ENCODE measurements at regions of chr22 and their contacts with region 1.

Region 1: DNA sequence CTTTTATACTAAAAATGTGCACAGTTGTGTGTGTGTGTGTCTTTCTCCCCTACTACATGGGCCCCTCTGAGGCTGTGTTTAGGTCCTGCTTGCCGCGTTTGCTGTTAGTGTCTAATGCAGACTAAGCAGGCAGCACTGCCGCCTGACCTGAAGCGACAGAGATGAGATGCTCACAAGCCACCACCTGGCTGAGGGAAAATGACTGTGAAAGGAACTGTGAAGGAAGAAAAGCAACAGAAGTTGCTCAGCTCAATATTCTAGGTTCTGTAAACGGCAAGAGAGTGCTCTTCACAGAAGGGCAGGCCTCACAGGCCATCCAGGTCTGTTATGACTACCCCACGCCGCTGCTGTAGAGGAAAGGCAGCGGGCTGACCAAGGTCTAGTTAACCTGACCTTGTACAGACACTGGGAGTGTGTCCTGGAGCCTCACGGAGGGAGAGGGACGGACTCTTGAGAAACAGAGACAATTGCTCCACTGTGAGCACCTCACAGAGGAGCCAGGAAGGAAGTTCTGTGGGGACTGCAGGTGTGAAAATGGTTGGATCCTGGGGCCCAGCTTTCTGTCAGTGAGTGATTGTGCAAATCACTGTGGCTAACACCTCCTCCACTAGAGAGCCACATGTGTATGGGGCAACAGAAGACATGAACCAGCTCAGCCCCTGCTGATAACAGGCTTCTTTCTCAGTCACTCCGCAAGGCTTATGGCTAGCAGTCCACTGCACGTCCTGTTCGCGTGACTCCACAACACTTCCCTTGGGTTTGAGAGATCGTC is 31.3 kb upstream of the YPEL1 start:
- DNase-seq: peak; percentile 79
- H3K4me3 Mint-ChIP-seq: no peak overlapping the region
- H3K27ac Mint-ChIP-seq: peak overlapping the region; percentile 8
- H3K4me1 Mint-ChIP-seq: peaks cover 55% of the 10 kb centered on the region
- H3K27me3 Mint-ChIP-seq: no peaks in the 10 kb centered on the region

Region 2: GRCh38 chr22:21755851-21756284 is 11.0 kb before region 1 on chr22:
- CTCF ChIA-PET with region 1: no interaction called
- intact Hi-C with region 1: no loop called
- DNase-seq: no peak
- H3K4me3 Mint-ChIP-seq: no peak overlapping the region
- H3K27ac Mint-ChIP-seq: no peak overlapping the region
- H3K4me1 Mint-ChIP-seq: no peaks in the 10 kb centered on the region
- H3K27me3 Mint-ChIP-seq: no peaks in the 10 kb centered on the region

Region 3: DNA sequence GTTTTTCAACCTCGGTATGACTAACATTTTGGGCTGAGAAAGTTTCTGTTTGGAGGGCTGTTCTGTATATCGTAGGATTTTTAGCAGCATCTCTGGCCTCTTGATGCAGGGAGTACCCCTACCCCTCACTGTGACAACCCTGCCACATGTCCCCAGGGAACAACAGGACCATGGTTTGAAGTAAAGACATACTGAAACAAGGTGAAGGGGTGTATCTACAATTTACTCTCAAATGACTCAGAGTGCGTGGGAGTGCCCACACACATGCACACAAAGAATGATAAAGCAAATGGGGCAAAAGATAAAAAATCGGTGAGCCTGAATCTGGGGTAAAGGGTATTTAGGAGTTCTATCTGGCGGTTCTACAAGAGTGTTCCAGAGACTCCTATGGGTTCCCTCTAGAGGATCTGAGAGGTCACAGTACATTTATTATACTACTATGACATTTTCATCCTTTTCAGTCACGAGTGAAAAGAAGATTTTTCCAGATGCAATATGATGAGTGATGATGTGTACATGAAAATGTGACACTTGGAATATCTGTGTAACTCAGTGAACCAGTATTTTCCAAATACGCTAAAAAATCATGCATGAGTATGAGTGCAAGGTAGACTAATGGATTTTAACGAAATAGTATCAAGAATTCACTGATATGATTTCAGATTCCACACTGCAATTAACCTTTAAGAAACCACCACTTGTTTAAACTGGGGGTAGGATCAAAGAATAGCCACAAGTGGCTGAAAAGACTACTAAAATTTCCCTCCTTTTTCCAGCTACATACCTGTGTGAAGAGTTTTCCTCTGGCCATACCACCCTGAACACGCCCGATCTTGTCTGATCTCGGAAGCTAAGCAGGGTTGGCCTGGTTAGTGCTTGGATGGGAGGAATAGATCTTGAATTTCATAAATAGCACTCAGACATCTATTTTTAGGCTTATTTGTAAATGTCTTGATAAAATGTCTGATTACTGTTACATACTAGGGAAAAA is 25.1 kb after region 1 on chr22:
- CTCF ChIA-PET with region 1: interaction called, 4 read pairs
- intact Hi-C with region 1: loop called (anchors 1 kb)
- DNase-seq: peak; percentile 36
- H3K4me3 Mint-ChIP-seq: no peak overlapping the region
- H3K27ac Mint-ChIP-seq: no peak overlapping the region
- H3K4me1 Mint-ChIP-seq: peaks cover 16% of the 10 kb centered on the region
- H3K27me3 Mint-ChIP-seq: no peaks in the 10 kb centered on the region

Measured in activated naive CD4-positive, alpha-beta T cell treated with anti-CD3 and anti-CD28 coated beads for 36 hours (primary cell).